B cell (primary cell): ENCODE measurements at regions of chr5 and their contacts with region 1.

Region 1: GRCh38 chr5:178732281-178732680 is 1.8 kb upstream of the ZNF354A start:
- DNase-seq: no peak
- ATAC-seq: no peak
- H3K4me3 ChIP-seq: no peak overlapping the region
- H3K4me3 Mint-ChIP-seq: peak overlapping the region; percentile 34
- H3K27ac ChIP-seq: no peak overlapping the region
- H3K27ac Mint-ChIP-seq: no peak overlapping the region
- H3K4me1 ChIP-seq: peaks cover 0 to 9% of the 10 kb centered on the region in 2 donors
- H3K4me1 Mint-ChIP-seq: peaks cover 5% of the 10 kb centered on the region
- H3K27me3 ChIP-seq: no peaks in the 10 kb centered on the region
- H3K27me3 Mint-ChIP-seq: peaks cover 3% of the 10 kb centered on the region
- CTCF ChIP-seq: no peak

Region 2: GRCh38 chr5:178569485-178569884 is 162.8 kb before region 1 on chr5:
- CTCF ChIA-PET with region 1: no interaction called
- POLR2A ChIA-PET with region 1: no interaction called
- intact Hi-C with region 1: no loop called
- DNase-seq: no peak
- ATAC-seq: no peak
- H3K4me3 ChIP-seq: no peak overlapping the region
- H3K4me3 Mint-ChIP-seq: no peak overlapping the region
- H3K27ac ChIP-seq: no peak overlapping the region
- H3K27ac Mint-ChIP-seq: no peak overlapping the region
- H3K4me1 ChIP-seq: no peaks in the 10 kb centered on the region
- H3K4me1 Mint-ChIP-seq: no peaks in the 10 kb centered on the region
- H3K27me3 ChIP-seq: peaks cover 0 to 11% (median 4%) of the 10 kb centered on the region in 4 experiments
- H3K27me3 Mint-ChIP-seq: peaks cover 46% of the 10 kb centered on the region
- CTCF ChIP-seq: no peak

Region 3: GRCh38 chr5:178895651-178896571 is 163.6 kb after region 1 on chr5 and contains the start of gene ZFP2:
- CTCF ChIA-PET with region 1: no interaction called
- POLR2A ChIA-PET with region 1: no interaction called
- intact Hi-C with region 1: loop called (anchors 2 kb)
- DNase-seq: peak; percentile 58
- ATAC-seq: peak; percentile 91
- H3K4me3 ChIP-seq: peak within 1 kb of the TSS in 4 of 5 experiments; percentile 48 to 77 (median 74)
- H3K4me3 Mint-ChIP-seq: peak within 1 kb of the TSS; percentile 87
- H3K27ac ChIP-seq: peak within 1 kb of the TSS in 1 of 2 donors; percentile 70
- H3K27ac Mint-ChIP-seq: peak within 1 kb of the TSS; percentile 37
- H3K4me1 ChIP-seq: peaks cover 3 to 11% of the 10 kb centered on the region in 2 donors
- H3K4me1 Mint-ChIP-seq: peaks cover 12% of the 10 kb centered on the region
- H3K27me3 ChIP-seq: no peaks in the 10 kb centered on the region
- H3K27me3 Mint-ChIP-seq: no peaks in the 10 kb centered on the region
- CTCF ChIP-seq: no peak
- total RNA-seq, gene ZFP2: 1.8 and 2.2 TPM in 2 replicates

Region 4: GRCh38 chr5:179023528-179024430 is 291.5 kb after region 1 on chr5 and contains the start of gene ZNF879:
- CTCF ChIA-PET with region 1: no interaction called
- POLR2A ChIA-PET with region 1: no interaction called
- intact Hi-C with region 1: loop called (anchors 1 kb)
- DNase-seq: peak; percentile 97
- ATAC-seq: peak; percentile 94
- H3K4me3 ChIP-seq: peak within 1 kb of the TSS; percentile 53 to 74 (median 67)
- H3K4me3 Mint-ChIP-seq: peak within 1 kb of the TSS; percentile 97
- H3K27ac ChIP-seq: peak within 1 kb of the TSS in 1 of 2 donors; percentile 76
- H3K27ac Mint-ChIP-seq: peak within 1 kb of the TSS; percentile 91
- H3K4me1 ChIP-seq: peaks cover 7 to 18% of the 10 kb centered on the region in 2 donors
- H3K4me1 Mint-ChIP-seq: peaks cover 15% of the 10 kb centered on the region
- H3K27me3 ChIP-seq: no peaks in the 10 kb centered on the region
- H3K27me3 Mint-ChIP-seq: no peaks in the 10 kb centered on the region
- CTCF ChIP-seq: no peak
- total RNA-seq, gene ZNF879: 13.2 and 14.7 TPM in 2 replicates

Region 5: GRCh38 chr5:179060116-179061008 is 328.1 kb after region 1 on chr5 and contains the start of gene ZNF354C:
- CTCF ChIA-PET with region 1: interaction called, 13 read pairs
- POLR2A ChIA-PET with region 1: no interaction called
- intact Hi-C with region 1: no loop called
- DNase-seq: peak; percentile 87
- ATAC-seq: peak; percentile 97
- H3K4me3 ChIP-seq: peak within 1 kb of the TSS; percentile 45 to 87 (median 78)
- H3K4me3 Mint-ChIP-seq: peak within 1 kb of the TSS; percentile 91
- H3K27ac ChIP-seq: peak within 1 kb of the TSS; percentile 41 to 77
- H3K27ac Mint-ChIP-seq: peak within 1 kb of the TSS; percentile 86
- H3K4me1 ChIP-seq: peaks cover 5 to 11% of the 10 kb centered on the region in 2 donors
- H3K4me1 Mint-ChIP-seq: peaks cover 21% of the 10 kb centered on the region
- H3K27me3 ChIP-seq: peaks cover 0 to 4% (median 0%) of the 10 kb centered on the region in 4 experiments
- H3K27me3 Mint-ChIP-seq: peaks cover 5% of the 10 kb centered on the region
- CTCF ChIP-seq: no peak
- total RNA-seq, gene ZNF354C: 9.1 and 9.5 TPM in 2 replicates